ENCODE measurements at regions of chr6 and their contacts with region 1.

Region 1: GRCh38 chr6:26064619-26065257 is 22.5 kb upstream of the HFE start:
- DNase-seq: no peak
- H3K4me3 ChIP-seq: no peak overlapping the region
- H3K27ac ChIP-seq: no peak overlapping the region
- H3K4me1 ChIP-seq: peaks cover 0 to 7% (median 5%) of the 10 kb centered on the region in 4 donors
- H3K27me3 ChIP-seq: no peaks in the 10 kb centered on the region
- CTCF ChIP-seq: peak; percentile 54 to 82 (median 68)
- EP300 ChIP-seq: no peak
- POLR2A ChIP-seq: no peak

Region 2: DNA sequence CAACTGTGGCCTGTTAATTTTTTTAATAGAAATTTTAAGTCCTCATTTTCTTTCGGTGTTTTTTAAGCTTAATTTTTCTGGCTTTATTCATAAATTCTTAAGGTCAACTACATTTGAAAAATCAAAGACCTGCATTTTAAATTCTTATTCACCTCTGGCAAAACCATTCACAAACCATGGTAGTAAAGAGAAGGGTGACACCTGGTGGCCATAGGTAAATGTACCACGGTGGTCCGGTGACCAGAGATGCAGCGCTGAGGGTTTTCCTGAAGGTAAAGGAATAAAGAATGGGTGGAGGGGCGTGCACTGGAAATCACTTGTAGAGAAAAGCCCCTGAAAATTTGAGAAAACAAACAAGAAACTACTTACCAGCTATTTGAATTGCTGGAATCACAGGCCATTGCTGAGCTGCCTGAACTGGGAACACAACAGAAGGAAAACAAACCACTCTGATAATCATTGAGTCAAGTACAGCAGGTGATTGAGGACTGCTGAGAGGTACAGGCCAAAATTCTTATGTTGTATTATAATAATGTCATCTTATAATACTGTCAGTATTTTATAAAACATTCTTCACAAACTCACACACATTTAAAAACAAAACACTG is 32.6 kb after region 1 on chr6:
- intact Hi-C with region 1: loop called (anchors 1 kb)
- DNase-seq: no peak
- H3K4me3 ChIP-seq: no peak overlapping the region
- H3K27ac ChIP-seq: no peak overlapping the region
- H3K4me1 ChIP-seq: no peaks in the 10 kb centered on the region
- H3K27me3 ChIP-seq: no peaks in the 10 kb centered on the region
- CTCF ChIP-seq: peak; percentile 66 to 88 (median 78)
- EP300 ChIP-seq: no peak
- POLR2A ChIP-seq: no peak

Region 3: DNA sequence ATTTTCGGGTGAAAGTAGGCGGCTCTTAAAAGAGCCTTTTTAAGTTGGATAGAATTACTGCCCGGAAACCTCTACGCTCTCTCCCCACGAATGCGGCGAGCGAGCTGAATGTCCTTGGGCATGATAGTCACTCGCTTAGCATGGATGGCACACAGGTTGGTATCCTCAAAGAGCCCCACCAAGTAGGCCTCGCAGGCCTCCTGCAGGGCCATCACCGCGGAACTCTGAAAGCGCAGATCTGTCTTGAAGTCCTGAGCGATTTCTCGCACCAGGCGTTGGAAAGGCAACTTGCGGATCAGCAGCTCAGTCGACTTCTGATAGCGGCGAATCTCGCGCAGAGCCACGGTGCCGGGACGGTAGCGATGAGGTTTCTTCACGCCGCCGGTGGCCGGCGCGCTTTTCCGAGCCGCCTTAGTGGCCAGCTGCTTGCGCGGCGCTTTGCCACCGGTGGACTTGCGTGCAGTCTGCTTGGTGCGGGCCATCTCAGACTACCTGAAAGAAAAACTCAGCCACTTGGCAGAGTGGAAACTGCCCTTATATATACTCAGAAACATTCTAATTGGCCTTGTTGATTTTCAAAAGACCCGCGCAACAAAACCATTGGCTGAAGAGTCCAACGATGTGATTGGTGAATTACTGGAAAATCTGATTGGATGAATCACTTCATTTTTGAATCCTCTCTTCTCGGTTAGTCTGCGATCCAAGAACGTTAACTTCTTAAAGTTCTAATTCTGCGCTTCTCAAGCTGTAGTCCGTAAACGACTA is 206.3 kb after region 1 on chr6:
- intact Hi-C with region 1: no loop called
- DNase-seq: peak; percentile 77
- H3K4me3 ChIP-seq: peak overlapping the region in 3 of 4 donors; percentile 31 to 45 (median 45)
- H3K27ac ChIP-seq: peak overlapping the region; percentile 83 to 91 (median 86)
- H3K4me1 ChIP-seq: peaks cover 0 to 25% (median 22%) of the 10 kb centered on the region in 4 donors
- H3K27me3 ChIP-seq: peaks cover 10 to 61% (median 32%) of the 10 kb centered on the region in 3 donors
- CTCF ChIP-seq: no peak
- EP300 ChIP-seq: no peak
- POLR2A ChIP-seq: no peak